CD14-positive monocyte (primary cell): ENCODE measurements at regions of chr17 and their contacts with region 1.

Region 1: GRCh38 chr17:21511363-21512198 is 135.4 kb downstream of the KCNJ12 start:
- DNase-seq: peak; percentile 54 to 68 (median 65)
- H3K4me3 ChIP-seq: peak overlapping the region; percentile 52 to 80 (median 71)
- H3K4me3 Mint-ChIP-seq: peak overlapping the region; percentile 76 to 91
- H3K27ac ChIP-seq: no peak overlapping the region
- H3K27ac Mint-ChIP-seq: peak overlapping the region in 1 of 7 donors; percentile 37
- H3K4me1 ChIP-seq: peaks cover 17 to 27% of the 10 kb centered on the region in 2 donors
- H3K4me1 Mint-ChIP-seq: peaks cover 28% of the 10 kb centered on the region
- H3K27me3 ChIP-seq: peaks cover 8 to 36% of the 10 kb centered on the region in 2 donors
- H3K27me3 Mint-ChIP-seq: peaks cover 26 to 41% (median 40%) of the 10 kb centered on the region in 3 donors
- CTCF ChIP-seq: peak; percentile 76

Region 2: GRCh38 chr17:21019976-21020586 is 491.5 kb before region 1 on chr17:
- intact Hi-C with region 1: loop called in 1 of 2 experiments (anchors 10 kb)
- DNase-seq: peak in 2 of 3 donors; percentile 12 to 21
- H3K4me3 ChIP-seq: no peak overlapping the region
- H3K4me3 Mint-ChIP-seq: no peak overlapping the region
- H3K27ac ChIP-seq: no peak overlapping the region
- H3K27ac Mint-ChIP-seq: peak overlapping the region in 2 of 7 donors; percentile 35 to 66
- H3K4me1 ChIP-seq: no peaks in the 10 kb centered on the region
- H3K4me1 Mint-ChIP-seq: no peaks in the 10 kb centered on the region
- H3K27me3 ChIP-seq: no peaks in the 10 kb centered on the region
- H3K27me3 Mint-ChIP-seq: no peaks in the 10 kb centered on the region
- CTCF ChIP-seq: peak; percentile 19

Region 3: GRCh38 chr17:21119247-21119918 is 392.2 kb before region 1 on chr17:
- intact Hi-C with region 1: loop called (anchors 10 kb)
- DNase-seq: peak; percentile 55 to 70 (median 57)
- H3K4me3 ChIP-seq: peak overlapping the region in 1 of 3 experiments; percentile 50
- H3K4me3 Mint-ChIP-seq: peak overlapping the region; percentile 47 to 92
- H3K27ac ChIP-seq: no peak overlapping the region
- H3K27ac Mint-ChIP-seq: peak overlapping the region in 2 of 7 donors; percentile 7 to 52
- H3K4me1 ChIP-seq: peaks cover 34 to 37% of the 10 kb centered on the region in 2 donors
- H3K4me1 Mint-ChIP-seq: peaks cover 39% of the 10 kb centered on the region
- H3K27me3 ChIP-seq: no peaks in the 10 kb centered on the region
- H3K27me3 Mint-ChIP-seq: peaks cover 0 to 6% (median 3%) of the 10 kb centered on the region in 3 donors
- CTCF ChIP-seq: peak; percentile 81

Region 4: DNA sequence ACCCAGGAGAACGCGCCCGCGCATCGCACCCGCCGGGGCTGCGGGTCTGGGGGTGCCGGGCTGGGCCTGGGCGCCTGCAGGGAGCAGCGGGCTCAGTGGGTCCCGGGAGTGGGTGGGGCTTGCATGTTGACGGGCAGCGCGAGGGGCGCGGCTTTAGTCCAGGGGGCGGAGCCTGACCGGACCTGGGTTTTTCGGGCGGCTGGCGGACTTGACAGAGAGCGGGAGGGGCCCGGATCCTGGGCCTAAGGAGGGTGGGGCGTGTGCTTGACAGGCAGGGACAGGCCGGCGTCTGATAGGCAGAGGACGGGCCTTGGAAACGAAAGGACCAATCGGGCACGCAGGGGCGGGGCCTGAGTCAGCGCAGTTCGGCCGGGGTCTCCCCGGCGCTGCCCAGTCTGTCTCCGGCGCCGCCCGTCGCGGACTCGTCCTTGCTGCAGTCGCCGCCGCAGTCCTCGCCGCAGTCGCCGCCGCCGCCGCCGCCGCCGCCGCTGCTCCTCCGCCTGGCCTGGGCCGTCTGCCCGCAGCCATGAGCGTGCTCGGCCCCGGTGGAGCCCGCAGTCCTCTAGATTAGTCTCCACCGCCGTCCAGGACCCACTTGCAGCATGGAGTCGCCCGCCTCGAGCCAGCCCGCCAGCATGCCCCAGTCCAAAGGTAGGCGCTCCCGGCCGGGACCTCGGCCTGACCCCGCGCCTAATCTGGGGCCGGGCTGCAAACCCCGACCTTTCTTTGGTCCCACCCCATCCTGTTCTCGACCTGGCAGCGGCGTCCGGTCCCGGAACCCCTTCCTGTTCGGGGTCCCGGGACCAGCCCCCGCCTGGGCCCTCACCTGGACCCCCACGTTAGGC is 227.0 kb before region 1 on chr17 and contains the start of gene MAP2K3:
- intact Hi-C with region 1: loop called in 1 of 2 experiments (anchors 5 kb)
- DNase-seq: peak; percentile 99 to 100 (median 99)
- H3K4me3 ChIP-seq: peak within 1 kb of the TSS; percentile 90 to 94 (median 92)
- H3K4me3 Mint-ChIP-seq: peak within 1 kb of the TSS; percentile 99 to 100
- H3K27ac ChIP-seq: peak within 1 kb of the TSS; percentile 99 to 100
- H3K27ac Mint-ChIP-seq: peak within 1 kb of the TSS; percentile 99 to 100 (median 99)
- H3K4me1 ChIP-seq: peaks cover 68 to 69% of the 10 kb centered on the region in 2 donors
- H3K4me1 Mint-ChIP-seq: peaks cover 69% of the 10 kb centered on the region
- H3K27me3 ChIP-seq: no peaks in the 10 kb centered on the region
- H3K27me3 Mint-ChIP-seq: peaks cover 1 to 3% (median 2%) of the 10 kb centered on the region in 3 donors
- CTCF ChIP-seq: no peak
- polyA plus RNA-seq, gene MAP2K3: 107 to 166 (median 164) TPM

Region 5: DNA sequence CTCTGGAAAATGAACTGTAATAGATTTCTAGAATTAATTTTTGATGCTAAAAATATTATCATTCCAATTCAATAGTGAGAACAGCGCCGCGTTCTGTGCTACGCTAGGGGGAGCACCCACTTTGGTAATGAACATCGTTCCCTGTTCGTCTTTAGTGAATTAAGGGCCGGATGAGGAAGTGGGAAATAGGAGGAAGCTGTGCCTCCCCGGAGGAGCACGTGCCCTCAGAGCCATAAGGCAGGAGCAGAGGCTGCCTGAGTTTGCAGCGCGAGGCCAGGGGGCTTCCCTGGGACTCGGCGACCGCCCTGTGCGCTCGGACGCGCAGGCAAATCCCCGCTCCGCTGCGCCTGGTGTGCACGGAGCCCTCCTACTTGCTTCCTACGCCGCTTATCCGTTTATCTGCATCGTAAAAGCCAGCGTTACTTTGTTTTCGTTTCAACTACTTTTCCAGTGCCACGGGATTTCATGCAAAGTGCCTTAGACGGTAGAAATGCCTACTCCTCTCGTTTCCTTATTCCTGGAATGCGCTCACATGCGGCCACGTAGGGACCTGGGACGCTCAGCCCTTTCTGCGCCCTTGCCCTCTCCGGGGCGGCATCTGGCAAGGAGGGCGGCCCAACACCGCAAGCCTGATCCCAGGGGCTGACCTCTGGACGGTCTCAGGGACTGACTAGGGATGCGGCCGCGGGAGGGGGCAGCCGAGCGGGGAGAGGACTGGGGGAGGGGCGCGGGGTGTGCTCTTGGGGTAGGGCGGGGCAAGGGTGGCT is 59.0 kb before region 1 on chr17:
- intact Hi-C with region 1: loop called (anchors 2 to 5 kb)
- DNase-seq: peak; percentile 71 to 87 (median 76)
- H3K4me3 ChIP-seq: no peak overlapping the region
- H3K4me3 Mint-ChIP-seq: peak overlapping the region in 1 of 2 donors; percentile 73
- H3K27ac ChIP-seq: no peak overlapping the region
- H3K27ac Mint-ChIP-seq: peak overlapping the region in 1 of 7 donors; percentile 40
- H3K4me1 ChIP-seq: peaks cover 0 to 2% of the 10 kb centered on the region in 2 donors
- H3K4me1 Mint-ChIP-seq: peaks cover 13% of the 10 kb centered on the region
- H3K27me3 ChIP-seq: peaks cover 0 to 9% of the 10 kb centered on the region in 2 donors
- H3K27me3 Mint-ChIP-seq: peaks cover 14 to 28% (median 20%) of the 10 kb centered on the region in 3 donors
- CTCF ChIP-seq: peak; percentile 76